ENCODE measurements at regions of chr7 and their contacts with region 1.

Region 1: DNA sequence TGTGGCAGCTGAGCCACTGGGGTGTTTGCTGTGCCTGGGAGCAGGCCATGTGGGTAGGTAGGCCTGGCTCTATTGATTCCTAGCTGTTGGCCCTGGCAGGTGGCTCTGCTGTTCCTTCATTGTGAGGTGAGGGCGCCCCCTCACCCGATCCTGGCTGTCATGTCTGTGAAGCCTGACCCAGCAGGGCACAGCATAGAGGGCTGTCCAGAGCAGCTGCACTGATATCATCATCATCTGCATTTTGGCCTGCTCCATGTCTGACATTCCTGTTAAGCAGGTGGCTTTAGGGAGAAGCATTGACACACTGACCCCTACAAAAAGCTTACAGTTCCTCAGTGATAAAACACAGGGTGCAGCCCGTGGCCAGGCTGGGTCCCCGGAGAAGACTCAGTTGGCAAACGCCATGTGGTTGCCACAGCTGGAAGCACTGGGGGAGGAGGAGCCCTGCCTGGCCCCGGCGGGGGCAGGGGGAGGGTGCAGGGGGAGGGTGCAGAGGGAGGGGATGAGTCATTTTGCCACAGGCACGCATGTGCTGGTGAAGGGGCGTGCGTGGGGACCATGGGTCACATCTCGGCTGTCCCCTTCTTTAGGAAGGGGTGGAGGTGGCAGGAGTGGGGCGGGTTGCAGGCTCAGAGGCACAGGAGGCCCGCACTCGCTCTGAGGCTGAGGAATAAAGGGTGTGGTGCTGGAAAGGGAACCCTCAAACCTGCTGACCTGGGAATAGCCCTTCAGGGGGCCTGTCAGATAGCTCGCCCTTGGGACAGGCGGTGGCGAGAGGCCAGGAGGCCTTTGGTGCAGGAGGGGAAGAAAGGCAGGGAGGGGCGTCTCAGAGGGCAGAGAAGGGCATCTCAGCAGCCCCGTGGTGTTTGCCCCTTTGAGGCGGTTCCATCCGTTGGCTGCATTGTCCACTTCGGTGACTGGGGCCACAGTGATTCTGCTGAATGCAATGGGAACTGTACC is 31.6 kb downstream of the IKZF1 start:
- DNase-seq: peak; percentile 58
- ATAC-seq: peak; percentile 63
- H3K4me3 ChIP-seq: no peak overlapping the region
- H3K4me3 Mint-ChIP-seq: no peak overlapping the region
- H3K27ac ChIP-seq: peak overlapping the region; percentile 72 to 95
- H3K27ac Mint-ChIP-seq: no peak overlapping the region
- H3K4me1 ChIP-seq: peaks cover 100% of the 10 kb centered on the region in 2 donors
- H3K4me1 Mint-ChIP-seq: peaks cover 14% of the 10 kb centered on the region
- H3K27me3 ChIP-seq: no peaks in the 10 kb centered on the region
- H3K27me3 Mint-ChIP-seq: no peaks in the 10 kb centered on the region
- CTCF ChIP-seq: no peak

Region 2: DNA sequence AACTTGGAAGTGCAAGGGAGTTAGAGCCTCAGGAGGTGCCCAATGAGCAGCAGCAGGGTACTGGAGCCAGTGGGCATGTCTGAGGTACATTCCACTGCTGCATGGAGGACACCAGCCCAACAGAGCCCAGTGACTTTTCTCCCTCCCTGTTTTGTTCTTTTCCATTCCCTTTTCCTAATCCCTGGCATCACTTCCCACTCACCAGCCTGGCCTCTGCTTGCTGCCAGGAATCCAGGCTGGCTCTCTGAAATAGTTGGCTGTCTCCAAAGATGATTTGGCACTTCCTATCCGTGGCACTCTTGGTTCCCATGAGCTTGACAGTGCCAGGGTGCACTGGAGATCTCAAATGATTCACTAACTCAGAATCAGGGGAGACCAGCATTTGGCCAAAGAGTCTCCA is 145.3 kb before region 1 on chr7:
- CTCF ChIA-PET with region 1: no interaction called
- POLR2A ChIA-PET with region 1: no interaction called
- intact Hi-C with region 1: no loop called
- DNase-seq: no peak
- ATAC-seq: no peak
- H3K4me3 ChIP-seq: no peak overlapping the region
- H3K4me3 Mint-ChIP-seq: no peak overlapping the region
- H3K27ac ChIP-seq: no peak overlapping the region
- H3K27ac Mint-ChIP-seq: no peak overlapping the region
- H3K4me1 ChIP-seq: no peaks in the 10 kb centered on the region
- H3K4me1 Mint-ChIP-seq: peaks cover 9% of the 10 kb centered on the region
- H3K27me3 ChIP-seq: no peaks in the 10 kb centered on the region
- H3K27me3 Mint-ChIP-seq: no peaks in the 10 kb centered on the region
- CTCF ChIP-seq: no peak

Region 3: DNA sequence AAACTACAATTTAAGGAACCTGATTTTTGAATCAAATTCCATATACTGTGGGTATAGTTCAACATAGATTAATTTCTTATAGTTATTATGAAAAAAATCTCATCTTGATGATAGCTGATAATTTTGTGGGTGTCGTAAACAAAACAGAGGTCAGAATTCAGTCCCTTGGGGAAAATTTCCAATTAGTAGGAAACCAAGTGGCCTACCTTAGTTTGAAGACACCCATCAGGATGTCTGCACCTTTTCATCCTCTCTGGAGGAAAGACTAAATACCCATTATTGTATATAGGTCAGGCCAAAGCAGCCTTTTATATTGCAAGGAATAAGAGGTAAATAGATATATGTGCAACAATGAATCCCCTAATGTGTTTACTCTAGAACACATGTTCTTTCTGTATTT is 25.1 kb before region 1 on chr7:
- CTCF ChIA-PET with region 1: interaction called, 17 read pairs
- POLR2A ChIA-PET with region 1: interaction called, 12 read pairs
- intact Hi-C with region 1: loop called (anchors 1 kb)
- DNase-seq: no peak
- ATAC-seq: no peak
- H3K4me3 ChIP-seq: peak overlapping the region; percentile 74 to 99 (median 87)
- H3K4me3 Mint-ChIP-seq: peak overlapping the region; percentile 91
- H3K27ac ChIP-seq: peak overlapping the region; percentile 64 to 83
- H3K27ac Mint-ChIP-seq: peak overlapping the region; percentile 97
- H3K4me1 ChIP-seq: peaks cover 76 to 78% of the 10 kb centered on the region in 2 donors
- H3K4me1 Mint-ChIP-seq: peaks cover 84% of the 10 kb centered on the region
- H3K27me3 ChIP-seq: no peaks in the 10 kb centered on the region
- H3K27me3 Mint-ChIP-seq: no peaks in the 10 kb centered on the region
- CTCF ChIP-seq: no peak

Region 4: DNA sequence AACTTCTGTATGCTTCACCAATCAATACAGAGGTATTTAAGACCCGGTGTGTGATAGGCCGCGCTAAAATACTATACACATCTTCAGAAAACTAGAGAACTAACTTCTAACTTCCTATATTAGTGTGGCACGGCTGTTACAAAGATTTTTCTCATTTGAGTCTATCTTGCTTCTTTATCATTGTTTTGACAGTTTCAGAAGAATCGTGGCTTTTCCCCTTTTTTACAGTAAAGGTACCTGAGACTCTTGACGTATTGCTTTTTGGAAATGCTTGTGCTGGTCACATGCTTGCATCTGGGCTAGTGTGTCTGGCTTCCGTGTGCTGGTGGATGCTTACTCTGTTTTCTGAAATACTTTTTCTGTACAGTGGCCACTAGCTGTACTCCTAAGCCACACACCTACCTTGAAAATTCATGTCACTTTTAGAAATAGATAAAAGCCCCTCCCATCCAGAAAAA is 18.8 kb before region 1 on chr7:
- CTCF ChIA-PET with region 1: interaction called, 17 read pairs
- POLR2A ChIA-PET with region 1: interaction called, 6 read pairs
- intact Hi-C with region 1: loop called (anchors 2 kb)
- DNase-seq: peak; percentile 86
- ATAC-seq: peak; percentile 74
- H3K4me3 ChIP-seq: peak overlapping the region in 1 of 5 experiments; percentile 37
- H3K4me3 Mint-ChIP-seq: peak overlapping the region; percentile 73
- H3K27ac ChIP-seq: peak overlapping the region; percentile 54 to 83
- H3K27ac Mint-ChIP-seq: peak overlapping the region; percentile 96
- H3K4me1 ChIP-seq: peaks cover 81 to 86% of the 10 kb centered on the region in 2 donors
- H3K4me1 Mint-ChIP-seq: peaks cover 93% of the 10 kb centered on the region
- H3K27me3 ChIP-seq: no peaks in the 10 kb centered on the region
- H3K27me3 Mint-ChIP-seq: no peaks in the 10 kb centered on the region
- CTCF ChIP-seq: peak; percentile 32

Region 5: GRCh38 chr7:50349963-50350944 is 14.2 kb after region 1 on chr7:
- CTCF ChIA-PET with region 1: interaction called, 15 read pairs
- POLR2A ChIA-PET with region 1: interaction called, 8 read pairs
- intact Hi-C with region 1: loop called (anchors 2 kb)
- DNase-seq: peak; percentile 40
- ATAC-seq: peak; percentile 42
- H3K4me3 ChIP-seq: peak overlapping the region in 2 of 5 experiments; percentile 3 to 17
- H3K4me3 Mint-ChIP-seq: peak overlapping the region; percentile 73
- H3K27ac ChIP-seq: peak overlapping the region; percentile 31 to 90
- H3K27ac Mint-ChIP-seq: peak overlapping the region; percentile 88
- H3K4me1 ChIP-seq: peaks cover 49 to 86% of the 10 kb centered on the region in 2 donors
- H3K4me1 Mint-ChIP-seq: peaks cover 90% of the 10 kb centered on the region
- H3K27me3 ChIP-seq: no peaks in the 10 kb centered on the region
- H3K27me3 Mint-ChIP-seq: no peaks in the 10 kb centered on the region
- CTCF ChIP-seq: no peak

Region 6: GRCh38 chr7:50409856-50410745 is 74.0 kb after region 1 on chr7:
- CTCF ChIA-PET with region 1: interaction called, 3 read pairs
- POLR2A ChIA-PET with region 1: interaction called, 4 read pairs
- intact Hi-C with region 1: loop called (anchors 2 kb)
- DNase-seq: peak; percentile 87
- ATAC-seq: peak; percentile 63
- H3K4me3 ChIP-seq: no peak overlapping the region
- H3K4me3 Mint-ChIP-seq: peak overlapping the region; percentile 83
- H3K27ac ChIP-seq: peak overlapping the region; percentile 90 to 94
- H3K27ac Mint-ChIP-seq: peak overlapping the region; percentile 99
- H3K4me1 ChIP-seq: peaks cover 97% of the 10 kb centered on the region in 2 donors
- H3K4me1 Mint-ChIP-seq: peaks cover 95% of the 10 kb centered on the region
- H3K27me3 ChIP-seq: no peaks in the 10 kb centered on the region
- H3K27me3 Mint-ChIP-seq: no peaks in the 10 kb centered on the region
- CTCF ChIP-seq: no peak

Measured in B cell (primary cell).